ENCODE measurements at regions of chr11 and their contacts with region 1.

Region 1: GRCh38 chr11:44556735-44557409 is 8.6 kb upstream of the CD82 start:
- DNase-seq: peak in 4 of 6 donors; percentile 49 to 74 (median 62)
- ATAC-seq: peak; percentile 81 to 95 (median 93)
- H3K4me3 ChIP-seq: no peak overlapping the region
- H3K27ac ChIP-seq: no peak overlapping the region
- H3K4me1 ChIP-seq: peaks cover 0 to 3% (median 0%) of the 10 kb centered on the region in 3 donors
- H3K27me3 ChIP-seq: no peaks in the 10 kb centered on the region
- CTCF ChIP-seq: peak; percentile 33 to 63 (median 56)

Region 2: DNA sequence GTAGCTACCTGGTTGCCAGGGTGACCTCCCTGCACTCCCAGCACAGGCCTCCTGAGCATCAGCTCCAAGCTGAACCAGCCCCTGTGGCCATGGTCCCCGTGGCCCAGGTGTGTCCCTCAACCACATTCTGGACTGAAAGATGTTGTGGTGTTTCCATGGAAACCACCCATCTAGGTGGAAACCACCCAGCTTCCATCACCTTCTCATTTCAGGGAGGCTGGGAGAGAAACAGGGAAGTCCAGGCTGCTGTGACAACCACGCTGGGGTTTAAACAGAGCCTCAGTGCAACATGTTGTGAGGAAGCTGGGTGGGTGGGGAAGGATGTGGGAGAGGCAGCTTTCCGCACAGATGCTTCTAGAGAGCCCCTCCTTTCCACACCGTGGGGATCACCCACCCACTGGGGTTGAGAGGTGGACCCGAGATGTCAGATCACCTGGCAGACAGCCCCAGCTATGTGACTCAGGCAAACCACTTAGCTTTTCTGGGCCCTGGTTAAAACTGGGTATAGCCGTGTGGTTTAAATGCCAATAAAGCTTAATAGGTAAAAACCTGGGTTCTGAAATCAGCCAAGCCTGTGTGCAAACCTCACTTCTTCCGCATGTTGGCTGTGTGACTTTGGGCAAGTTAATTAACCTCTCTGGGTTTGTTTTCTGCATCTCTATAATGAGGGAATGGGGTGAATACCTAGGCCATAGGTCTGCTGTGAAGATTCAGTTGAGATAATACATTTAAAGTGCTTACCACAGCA is 55.0 kb after region 1 on chr11:
- intact Hi-C with region 1: loop called (anchors 2 to 10 kb)
- DNase-seq: no peak
- ATAC-seq: no peak
- H3K4me3 ChIP-seq: no peak overlapping the region
- H3K27ac ChIP-seq: no peak overlapping the region
- H3K4me1 ChIP-seq: no peaks in the 10 kb centered on the region
- H3K27me3 ChIP-seq: no peaks in the 10 kb centered on the region
- CTCF ChIP-seq: no peak

Region 3: DNA sequence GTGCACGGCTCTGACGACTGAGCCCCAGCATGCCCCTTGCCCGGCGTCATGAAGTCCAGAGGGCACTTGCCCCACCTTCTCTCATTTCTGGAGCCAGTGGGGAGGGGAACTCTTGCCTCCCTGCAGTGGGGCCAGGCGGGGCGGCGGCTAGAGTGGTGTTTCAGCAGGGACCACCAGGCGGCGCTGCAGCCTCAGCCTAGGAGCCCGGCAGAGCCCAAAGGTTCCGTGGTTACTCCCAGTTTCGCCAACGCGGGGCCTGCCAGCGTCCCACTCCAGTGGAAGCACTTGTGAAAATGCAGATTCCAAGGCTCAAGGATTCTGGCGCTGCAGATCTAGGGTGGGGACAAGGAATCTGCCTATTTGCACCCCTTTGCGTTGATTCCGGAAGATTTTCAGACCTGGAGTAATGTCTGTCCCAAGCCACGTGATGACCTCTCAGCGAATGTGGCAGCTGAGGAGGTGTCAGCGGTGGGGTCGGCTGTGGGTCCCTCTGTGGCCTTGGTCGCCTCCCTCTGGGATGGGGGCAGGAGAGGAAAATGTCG is 64.3 kb after region 1 on chr11:
- intact Hi-C with region 1: loop called in 2 of 3 experiments (anchors 5 to 10 kb)
- DNase-seq: peak in 5 of 6 donors; percentile 35 to 87 (median 58)
- ATAC-seq: peak; percentile 49 to 85 (median 75)
- H3K4me3 ChIP-seq: no peak overlapping the region
- H3K27ac ChIP-seq: no peak overlapping the region
- H3K4me1 ChIP-seq: no peaks in the 10 kb centered on the region
- H3K27me3 ChIP-seq: no peaks in the 10 kb centered on the region
- CTCF ChIP-seq: peak; percentile 72 to 83 (median 78)

Region 4: DNA sequence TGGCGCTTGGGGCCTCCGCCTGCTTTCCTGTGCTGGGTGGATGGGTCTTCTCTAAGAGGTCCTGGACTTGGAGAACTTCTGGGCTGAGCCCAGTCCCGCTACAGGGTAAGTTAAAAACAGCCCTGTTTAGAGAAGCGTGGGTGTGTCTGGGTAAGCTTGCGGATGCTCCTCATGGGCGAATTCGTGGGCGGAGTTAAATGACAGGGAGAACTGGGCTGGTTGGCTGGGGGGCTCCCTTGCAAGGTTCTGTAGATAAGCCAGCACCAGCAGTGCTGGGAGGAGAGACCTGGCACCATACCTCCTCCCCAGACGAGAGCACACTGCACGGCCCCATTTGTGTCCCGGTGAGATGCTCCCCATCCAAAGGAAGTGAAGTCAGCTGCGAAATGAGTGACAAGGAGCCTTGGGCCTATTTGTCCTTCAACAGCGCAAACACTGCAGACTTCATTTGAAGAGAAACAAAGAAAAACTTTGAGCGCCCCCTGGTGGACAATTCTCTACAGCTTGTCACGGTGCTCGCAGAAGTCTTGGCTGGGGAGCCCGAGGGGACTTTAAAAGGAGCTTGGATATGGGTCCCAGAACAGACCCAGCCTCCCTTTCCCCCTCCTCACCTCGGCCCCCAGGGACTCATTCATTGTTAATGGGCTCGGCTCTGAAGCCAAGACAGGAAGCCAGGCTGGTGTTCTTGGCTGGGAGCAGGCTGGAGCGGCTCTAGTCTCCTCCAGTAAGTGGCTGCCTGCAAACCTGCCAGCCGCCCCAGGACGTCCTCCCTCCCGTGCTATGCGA is 354.4 kb after region 1 on chr11:
- intact Hi-C with region 1: loop called in 2 of 3 experiments (anchors 5 to 10 kb)
- DNase-seq: peak in 5 of 6 donors; percentile 70 to 88 (median 78)
- ATAC-seq: peak; percentile 86 to 95 (median 92)
- H3K4me3 ChIP-seq: no peak overlapping the region
- H3K27ac ChIP-seq: no peak overlapping the region
- H3K4me1 ChIP-seq: no peaks in the 10 kb centered on the region
- H3K27me3 ChIP-seq: no peaks in the 10 kb centered on the region
- CTCF ChIP-seq: peak; percentile 74 to 91 (median 88)

Measured in pancreas (tissue), 10 donors.